Right ventricle myocardium superior (tissue), 1 donor: ENCODE measurements at regions of chr10 and their contacts with region 1.

Region 1: DNA sequence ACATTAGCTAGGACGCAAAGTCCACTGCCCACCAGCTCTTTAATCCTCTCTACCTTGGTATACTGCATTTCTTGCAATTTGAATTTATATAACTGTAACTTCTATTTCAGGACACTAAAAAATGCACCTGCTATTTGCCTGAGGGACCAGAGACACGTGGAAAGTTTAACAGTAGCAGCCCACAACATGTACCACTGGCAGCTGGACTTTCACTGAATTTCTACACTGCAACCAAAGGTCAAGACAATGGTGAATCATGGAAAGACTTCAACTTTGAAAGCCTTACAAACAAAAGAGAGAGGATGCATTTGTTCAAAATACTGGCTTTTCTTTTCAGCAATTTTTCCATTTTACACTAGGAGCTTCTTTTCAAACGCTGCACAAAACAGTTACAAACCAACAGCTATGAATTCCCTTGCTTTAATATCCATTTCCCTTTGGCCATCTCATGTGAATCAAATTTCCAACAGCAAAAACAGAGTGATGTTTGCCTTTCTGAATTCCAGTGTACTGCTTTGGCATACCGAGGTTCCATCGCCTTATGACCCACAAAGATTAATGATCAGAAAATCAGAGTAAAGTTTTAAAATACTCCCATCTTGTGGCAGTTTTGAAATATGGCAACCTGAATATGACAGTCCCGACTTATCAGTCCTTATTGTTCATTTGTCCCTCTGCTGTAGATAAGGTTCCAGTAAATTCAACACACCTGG is 29.9 kb upstream of the HNRNPH3 start:
- DNase-seq: no peak
- ATAC-seq: peak; percentile 86

Region 2: DNA sequence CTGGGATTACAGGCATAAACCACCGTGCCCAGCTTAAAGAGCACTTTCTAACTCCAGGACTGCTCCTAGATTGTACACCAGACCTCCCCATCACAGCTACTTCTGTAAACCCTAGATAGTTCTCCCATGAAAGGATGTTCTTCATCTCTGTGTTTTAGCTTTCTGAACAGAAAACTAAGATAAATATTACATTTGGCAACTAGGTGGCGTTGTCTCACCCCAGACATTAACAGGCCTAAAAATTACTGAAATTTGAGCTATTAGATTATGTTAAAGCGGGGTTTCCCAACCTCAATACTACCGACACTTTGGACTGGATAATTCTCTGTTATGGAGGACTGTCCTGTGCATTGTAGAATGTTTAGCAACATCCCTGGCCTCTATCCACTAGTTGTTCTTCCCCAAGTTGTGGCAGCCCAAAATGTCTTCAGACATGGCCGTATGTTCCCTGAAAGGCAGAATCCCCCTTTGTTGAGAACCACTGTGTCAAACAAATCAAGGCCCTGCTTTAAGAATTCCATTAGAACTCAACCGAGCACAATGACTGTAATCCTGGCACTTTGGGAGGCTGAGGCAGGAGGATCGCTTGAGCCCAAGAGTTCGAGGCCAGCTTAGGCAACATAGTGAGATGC is 89.1 kb before region 1 on chr10:
- intact Hi-C with region 1: loop called (anchors 5 kb)
- DNase-seq: no peak
- ATAC-seq: no peak

Region 3: DNA sequence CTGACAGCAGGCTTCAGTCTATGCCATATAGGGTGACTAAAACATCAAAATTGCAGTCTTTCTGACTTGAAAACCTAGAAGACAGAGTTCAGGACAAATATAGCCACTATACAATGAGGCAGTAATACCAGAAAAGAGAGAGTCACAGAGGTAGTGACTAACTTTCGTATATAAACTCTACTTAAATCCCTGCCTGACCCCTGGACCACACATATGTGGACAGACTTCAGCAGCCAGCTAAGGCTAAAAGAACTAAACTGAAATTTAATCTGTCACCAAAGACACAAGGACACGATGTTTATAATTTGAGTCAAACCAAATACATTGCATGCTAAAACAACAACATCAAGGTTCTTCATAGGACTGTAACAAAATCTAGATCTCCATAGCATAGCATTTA is 1686.1 kb after region 1 on chr10:
- intact Hi-C with region 1: no loop called
- DNase-seq: no peak
- ATAC-seq: no peak